H1 (cell line): ENCODE measurements at regions of chr5 and their contacts with region 1.

Region 1: GRCh38 chr5:141811287-141812155 is 66.7 kb downstream of the PCDH1 start:
- DNase-seq: peak in 1 of 2 experiments; percentile 89
- H3K4me3 ChIP-seq: peak overlapping the region in 2 of 4 experiments; percentile 21 to 53; a peak in 5 of 8 replicates
- H3K27ac ChIP-seq: no peak overlapping the region
- H3K4me1 ChIP-seq: peaks cover 33 to 51% (median 34%) of the 10 kb centered on the region in 4 experiments
- H3K27me3 ChIP-seq: no peaks in the 10 kb centered on the region; a peak in 1 of 7 replicates
- CTCF ChIP-seq: peak in 2 of 3 experiments; percentile 80 to 91; a peak in 3 of 4 replicates
- EP300 ChIP-seq: peak in 1 of 2 experiments; percentile 52; a peak in 1 of 3 replicates
- POLR2A ChIP-seq: no peak
- RAD21 ChIP-seq: peak; percentile 66 to 74

Region 2: DNA sequence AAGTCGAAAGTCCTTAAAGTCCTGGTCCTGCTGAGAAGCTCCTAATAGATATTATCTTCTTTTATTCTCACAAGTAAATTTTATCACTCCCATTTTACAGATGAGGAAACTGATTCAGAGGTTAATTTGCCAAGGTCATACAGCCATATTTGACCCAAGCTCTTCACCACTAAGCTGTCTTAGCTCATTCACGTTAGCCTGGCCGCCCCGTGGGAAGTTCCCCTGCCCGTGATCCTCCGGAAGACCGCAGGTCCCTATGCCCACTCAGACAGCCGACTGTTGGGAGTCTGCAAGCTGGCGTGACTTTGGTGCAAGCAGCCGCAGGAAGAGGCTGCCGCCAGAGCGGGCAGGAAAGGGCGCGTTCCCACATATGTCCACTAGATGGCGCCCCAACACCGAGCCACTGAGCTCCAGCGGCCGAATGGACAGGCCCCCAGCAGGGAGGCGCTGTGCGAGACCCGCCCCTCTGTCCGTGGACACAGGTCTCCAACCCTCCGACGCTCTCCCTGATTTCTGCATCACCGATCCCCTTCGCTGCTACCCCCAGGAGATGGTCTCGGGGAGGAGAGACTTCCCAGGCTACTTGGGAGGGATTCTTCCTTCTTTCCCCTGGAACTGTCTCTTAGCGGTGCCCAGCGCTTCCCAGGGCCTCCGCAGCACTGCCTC is 119.5 kb before region 1 on chr5:
- CTCF ChIA-PET with region 1: interaction called, 345 read pairs
- POLR2A ChIA-PET with region 1: interaction called, 3 read pairs
- DNase-seq: peak in 1 of 2 experiments; percentile 98
- H3K4me3 ChIP-seq: peak overlapping the region; percentile 19 to 60 (median 54); a peak in 7 of 8 replicates
- H3K27ac ChIP-seq: no peak overlapping the region
- H3K4me1 ChIP-seq: peaks cover 4 to 13% (median 9%) of the 10 kb centered on the region in 4 experiments
- H3K27me3 ChIP-seq: peaks cover 0 to 11% (median 2%) of the 10 kb centered on the region in 4 experiments; a peak in 2 of 7 replicates
- CTCF ChIP-seq: peak; percentile 95 to 99 (median 97)
- EP300 ChIP-seq: no peak
- POLR2A ChIP-seq: no peak
- RAD21 ChIP-seq: peak; percentile 98 to 99

Region 3: GRCh38 chr5:141747152-141748141 is 64.1 kb before region 1 on chr5:
- CTCF ChIA-PET with region 1: interaction called, 179 read pairs
- POLR2A ChIA-PET with region 1: interaction called, 4 read pairs
- DNase-seq: peak; percentile 50 to 80
- H3K4me3 ChIP-seq: no peak overlapping the region; a peak in 1 of 8 replicates
- H3K27ac ChIP-seq: no peak overlapping the region
- H3K4me1 ChIP-seq: peaks cover 0 to 9% (median 5%) of the 10 kb centered on the region in 4 experiments; a peak in 5 of 7 replicates
- H3K27me3 ChIP-seq: peaks cover 4 to 10% (median 4%) of the 10 kb centered on the region in 4 experiments
- CTCF ChIP-seq: no peak
- EP300 ChIP-seq: no peak
- POLR2A ChIP-seq: no peak
- RAD21 ChIP-seq: no peak

Region 4: DNA sequence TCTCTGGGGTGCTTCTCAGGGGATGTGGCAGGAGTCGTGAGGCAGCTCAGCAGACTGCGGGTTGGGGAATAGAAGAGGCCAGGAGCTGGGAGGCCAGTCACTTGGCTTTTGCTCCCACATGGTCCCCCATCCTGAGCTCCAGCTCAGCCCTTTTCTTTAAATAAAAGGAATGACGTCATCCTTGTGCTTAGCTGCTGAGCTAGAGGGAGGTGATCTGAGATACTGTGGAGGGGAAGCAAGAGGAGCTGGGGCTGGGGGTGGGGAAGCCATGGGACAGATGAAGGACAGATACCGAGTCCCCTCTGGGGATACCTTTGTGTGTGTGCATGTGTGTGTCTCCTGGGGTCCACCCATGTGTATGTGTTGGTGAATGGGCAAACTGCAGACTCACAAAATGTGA is 40.5 kb before region 1 on chr5:
- CTCF ChIA-PET with region 1: interaction called, 125 read pairs
- POLR2A ChIA-PET with region 1: interaction called, 8 read pairs
- DNase-seq: no peak
- H3K4me3 ChIP-seq: no peak overlapping the region
- H3K27ac ChIP-seq: no peak overlapping the region
- H3K4me1 ChIP-seq: peaks cover 0 to 7% (median 3%) of the 10 kb centered on the region in 4 experiments; a peak in 5 of 7 replicates
- H3K27me3 ChIP-seq: no peaks in the 10 kb centered on the region; a peak in 1 of 7 replicates
- CTCF ChIP-seq: no peak
- EP300 ChIP-seq: no peak
- POLR2A ChIP-seq: no peak
- RAD21 ChIP-seq: no peak

Region 5: DNA sequence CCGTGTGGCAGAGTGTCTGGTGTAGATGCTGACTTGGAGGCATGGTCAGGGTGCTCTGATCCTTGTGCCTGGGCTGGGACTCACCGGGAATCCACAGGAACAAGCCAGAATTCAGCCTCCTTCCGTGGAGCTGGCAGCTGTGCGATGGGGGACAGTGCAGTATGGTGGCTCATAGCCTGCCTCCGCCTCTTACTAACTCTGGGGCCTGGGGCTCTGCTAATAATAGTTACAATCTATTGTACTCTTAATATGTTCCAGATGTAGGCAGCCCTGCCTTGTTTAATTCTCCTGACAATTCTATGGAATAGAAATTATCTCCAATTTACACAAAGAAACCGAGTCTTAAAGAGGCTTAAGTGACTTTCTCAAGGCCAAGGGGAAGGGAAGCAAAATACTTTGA is 10.9 kb before region 1 on chr5:
- CTCF ChIA-PET with region 1: interaction called, 210 read pairs
- POLR2A ChIA-PET with region 1: interaction called, 11 read pairs
- DNase-seq: no peak
- H3K4me3 ChIP-seq: no peak overlapping the region
- H3K27ac ChIP-seq: no peak overlapping the region
- H3K4me1 ChIP-seq: peaks cover 4 to 19% (median 8%) of the 10 kb centered on the region in 4 experiments
- H3K27me3 ChIP-seq: no peaks in the 10 kb centered on the region
- CTCF ChIP-seq: no peak
- EP300 ChIP-seq: no peak
- POLR2A ChIP-seq: no peak
- RAD21 ChIP-seq: no peak

Region 6: GRCh38 chr5:141849375-141850243 is 38.1 kb after region 1 on chr5:
- CTCF ChIA-PET with region 1: interaction called, 94 read pairs
- POLR2A ChIA-PET with region 1: interaction called, 8 read pairs
- DNase-seq: peak; percentile 58 to 93
- H3K4me3 ChIP-seq: peak overlapping the region; percentile 47 to 78 (median 70)
- H3K27ac ChIP-seq: peak overlapping the region; percentile 99
- H3K4me1 ChIP-seq: peaks cover 27 to 57% (median 46%) of the 10 kb centered on the region in 4 experiments
- H3K27me3 ChIP-seq: no peaks in the 10 kb centered on the region
- CTCF ChIP-seq: no peak
- EP300 ChIP-seq: peak in 1 of 2 experiments; percentile 82; a peak in 1 of 3 replicates
- POLR2A ChIP-seq: peak in 1 of 2 experiments; percentile 74; a peak in 2 of 3 replicates
- RAD21 ChIP-seq: no peak; a peak in 1 of 4 replicates

Region 7: GRCh38 chr5:141960449-141961202 is 149.1 kb after region 1 on chr5:
- CTCF ChIA-PET with region 1: interaction called, 10 read pairs
- POLR2A ChIA-PET with region 1: no interaction called
- DNase-seq: peak; percentile 50 to 92
- H3K4me3 ChIP-seq: no peak overlapping the region
- H3K27ac ChIP-seq: no peak overlapping the region
- H3K4me1 ChIP-seq: peaks cover 2 to 9% (median 9%) of the 10 kb centered on the region in 4 experiments; a peak in 6 of 7 replicates
- H3K27me3 ChIP-seq: no peaks in the 10 kb centered on the region; a peak in 1 of 7 replicates
- CTCF ChIP-seq: peak; percentile 80 to 91 (median 88)
- EP300 ChIP-seq: no peak
- POLR2A ChIP-seq: no peak
- RAD21 ChIP-seq: peak; percentile 87